ENCODE measurements at regions of chr10 and their contacts with region 1.

Region 1: DNA sequence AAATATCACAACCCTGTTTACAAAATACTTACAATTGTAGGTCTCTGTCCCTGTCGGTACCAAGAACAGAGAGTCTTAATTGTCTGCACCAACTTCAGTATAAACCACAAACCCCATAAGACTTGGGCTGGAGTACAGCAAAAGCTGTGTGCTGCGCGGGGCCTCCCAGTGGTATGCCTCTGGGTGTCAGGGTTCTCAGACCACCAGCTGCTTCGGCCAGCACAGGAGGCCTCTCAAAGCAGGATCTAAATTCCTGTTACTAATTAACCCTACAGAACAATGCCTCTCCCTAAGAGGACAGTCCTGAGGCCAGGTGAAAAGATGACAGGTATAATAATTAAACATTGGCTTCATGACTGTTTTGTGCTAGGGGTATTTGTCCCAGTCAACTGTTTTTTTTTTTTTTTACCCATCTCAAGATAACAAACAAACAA is 957 bp upstream of the SVIL start:
- DNase-seq: peak; percentile 40 to 54
- ATAC-seq: peak; percentile 36 to 54 (median 36)
- H3K4me3 ChIP-seq: no peak overlapping the region
- H3K4me3 Mint-ChIP-seq: peak overlapping the region; percentile 78
- H3K27ac ChIP-seq: peak overlapping the region; percentile 83
- H3K27ac Mint-ChIP-seq: peak overlapping the region; percentile 76 to 87
- H3K4me1 ChIP-seq: peaks cover 28% of the 10 kb centered on the region
- H3K4me1 Mint-ChIP-seq: peaks cover 46 to 54% of the 10 kb centered on the region in 2 donors
- H3K27me3 ChIP-seq: no peaks in the 10 kb centered on the region
- H3K27me3 Mint-ChIP-seq: peaks cover 0 to 3% of the 10 kb centered on the region in 2 donors
- CTCF ChIP-seq: no peak

Region 2: GRCh38 chr10:29455095-29455494 is 180.6 kb before region 1 on chr10:
- intact Hi-C with region 1: no loop called
- DNase-seq: no peak
- ATAC-seq: no peak
- H3K4me3 ChIP-seq: no peak overlapping the region
- H3K4me3 Mint-ChIP-seq: no peak overlapping the region
- H3K27ac ChIP-seq: no peak overlapping the region
- H3K27ac Mint-ChIP-seq: no peak overlapping the region
- H3K4me1 ChIP-seq: no peaks in the 10 kb centered on the region
- H3K4me1 Mint-ChIP-seq: no peaks in the 10 kb centered on the region
- H3K27me3 ChIP-seq: no peaks in the 10 kb centered on the region
- H3K27me3 Mint-ChIP-seq: no peaks in the 10 kb centered on the region
- CTCF ChIP-seq: no peak

Region 3: DNA sequence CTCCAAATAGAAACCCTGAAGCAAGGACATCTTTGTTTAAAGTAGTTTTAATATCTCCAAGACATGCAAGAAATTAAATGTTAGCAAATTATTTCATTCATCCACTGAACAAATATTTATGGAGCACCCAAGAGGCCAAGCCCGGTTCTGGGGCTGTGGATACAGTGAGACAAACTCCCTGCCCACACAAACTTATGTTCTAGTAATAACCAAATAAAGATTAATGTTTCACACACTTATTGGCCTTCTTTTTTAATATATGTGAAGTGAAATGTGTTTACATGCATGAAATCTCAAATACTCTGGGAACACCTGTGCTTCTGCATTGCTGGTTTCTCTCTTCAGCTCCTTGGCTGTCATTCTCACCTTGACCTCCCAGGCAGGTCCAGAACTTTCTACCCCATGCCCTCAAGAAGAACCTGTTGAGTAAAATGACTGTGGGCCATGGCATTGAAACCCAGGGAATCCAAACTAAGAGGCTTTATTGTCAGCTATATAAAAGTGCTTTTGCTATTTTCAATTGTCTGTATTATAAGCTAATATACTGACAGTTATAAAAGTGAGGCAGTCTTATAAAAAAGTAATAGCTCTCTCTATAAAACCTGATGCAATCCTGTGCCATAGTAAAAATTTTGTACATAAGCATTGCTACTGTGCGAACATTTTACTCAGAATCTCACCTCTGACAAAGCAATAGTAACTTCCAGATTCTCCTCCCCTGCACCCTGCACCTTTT is 44.6 kb before region 1 on chr10:
- intact Hi-C with region 1: loop called (anchors 1 kb)
- DNase-seq: peak in 1 of 2 donors; percentile 8
- ATAC-seq: no peak
- H3K4me3 ChIP-seq: no peak overlapping the region
- H3K4me3 Mint-ChIP-seq: peak overlapping the region; percentile 22
- H3K27ac ChIP-seq: no peak overlapping the region
- H3K27ac Mint-ChIP-seq: peak overlapping the region; percentile 23 to 72
- H3K4me1 ChIP-seq: peaks cover 9% of the 10 kb centered on the region
- H3K4me1 Mint-ChIP-seq: peaks cover 11 to 12% of the 10 kb centered on the region in 2 donors
- H3K27me3 ChIP-seq: no peaks in the 10 kb centered on the region
- H3K27me3 Mint-ChIP-seq: no peaks in the 10 kb centered on the region
- CTCF ChIP-seq: peak; percentile 52

Region 4: GRCh38 chr10:29618341-29619171 is 17.2 kb before region 1 on chr10:
- intact Hi-C with region 1: no loop called
- DNase-seq: no peak
- ATAC-seq: no peak
- H3K4me3 ChIP-seq: no peak overlapping the region
- H3K4me3 Mint-ChIP-seq: no peak overlapping the region
- H3K27ac ChIP-seq: no peak overlapping the region
- H3K27ac Mint-ChIP-seq: peak overlapping the region in 1 of 2 donors; percentile 73
- H3K4me1 ChIP-seq: peaks cover 3% of the 10 kb centered on the region
- H3K4me1 Mint-ChIP-seq: peaks cover 21 to 30% of the 10 kb centered on the region in 2 donors
- H3K27me3 ChIP-seq: no peaks in the 10 kb centered on the region
- H3K27me3 Mint-ChIP-seq: no peaks in the 10 kb centered on the region
- CTCF ChIP-seq: no peak

Region 5: DNA sequence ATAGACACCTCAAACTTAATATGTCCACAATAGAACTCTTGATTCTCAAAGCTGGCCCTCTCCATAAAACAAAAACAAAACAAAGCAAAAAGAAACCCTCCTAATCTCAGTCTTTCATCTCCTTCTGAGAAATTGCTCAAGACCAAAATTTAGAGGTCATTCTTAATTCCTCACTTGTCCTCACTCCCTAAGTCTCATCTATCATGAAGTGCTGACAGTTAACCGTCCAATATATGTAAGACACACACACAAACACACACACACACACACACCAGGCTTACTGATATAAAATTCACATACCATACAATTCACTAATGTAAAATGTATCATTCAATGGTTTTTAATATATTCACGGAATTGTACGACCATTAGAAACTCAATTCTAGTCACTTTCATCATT is 16.0 kb after region 1 on chr10:
- intact Hi-C with region 1: no loop called
- DNase-seq: no peak
- ATAC-seq: no peak
- H3K4me3 ChIP-seq: no peak overlapping the region
- H3K4me3 Mint-ChIP-seq: no peak overlapping the region
- H3K27ac ChIP-seq: no peak overlapping the region
- H3K27ac Mint-ChIP-seq: peak overlapping the region in 1 of 2 donors; percentile 0
- H3K4me1 ChIP-seq: peaks cover 16% of the 10 kb centered on the region
- H3K4me1 Mint-ChIP-seq: peaks cover 34 to 56% of the 10 kb centered on the region in 2 donors
- H3K27me3 ChIP-seq: no peaks in the 10 kb centered on the region
- H3K27me3 Mint-ChIP-seq: no peaks in the 10 kb centered on the region
- CTCF ChIP-seq: no peak

Region 6: DNA sequence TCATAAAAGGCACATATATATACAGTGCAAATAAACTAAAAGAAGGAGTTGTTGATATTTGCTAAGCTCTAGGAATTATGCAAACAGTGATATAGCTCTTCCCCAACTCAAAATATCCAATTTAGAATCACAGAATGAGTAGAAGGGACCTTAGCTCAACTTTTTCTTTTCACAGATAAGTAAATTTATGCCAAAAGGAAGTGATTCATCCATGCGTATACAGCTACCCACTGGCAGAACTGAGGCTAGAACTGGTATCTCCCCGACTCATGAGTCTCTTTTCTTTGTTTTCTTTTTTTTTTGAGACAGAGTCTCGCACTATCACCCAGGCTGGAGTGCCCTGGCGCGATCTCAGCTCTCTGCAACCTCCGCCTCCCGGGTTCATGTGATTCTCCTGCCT is 53.3 kb after region 1 on chr10:
- intact Hi-C with region 1: loop called (anchors 5 kb)
- DNase-seq: peak in 1 of 2 donors; percentile 34
- ATAC-seq: peak; percentile 78 to 80 (median 80)
- H3K4me3 ChIP-seq: no peak overlapping the region
- H3K4me3 Mint-ChIP-seq: peak overlapping the region; percentile 49
- H3K27ac ChIP-seq: peak overlapping the region; percentile 2
- H3K27ac Mint-ChIP-seq: peak overlapping the region; percentile 56 to 85
- H3K4me1 ChIP-seq: peaks cover 19% of the 10 kb centered on the region
- H3K4me1 Mint-ChIP-seq: peaks cover 54 to 57% of the 10 kb centered on the region in 2 donors
- H3K27me3 ChIP-seq: no peaks in the 10 kb centered on the region
- H3K27me3 Mint-ChIP-seq: no peaks in the 10 kb centered on the region
- CTCF ChIP-seq: no peak

Region 7: GRCh38 chr10:29735596-29736318 is 100.0 kb after region 1 on chr10:
- intact Hi-C with region 1: loop called (anchors 1 kb)
- DNase-seq: peak; percentile 84 to 86
- ATAC-seq: peak; percentile 85 to 91 (median 86)
- H3K4me3 ChIP-seq: peak overlapping the region; percentile 58
- H3K4me3 Mint-ChIP-seq: peak overlapping the region; percentile 86
- H3K27ac ChIP-seq: no peak overlapping the region
- H3K27ac Mint-ChIP-seq: peak overlapping the region in 1 of 2 donors; percentile 80
- H3K4me1 ChIP-seq: peaks cover 23% of the 10 kb centered on the region
- H3K4me1 Mint-ChIP-seq: peaks cover 11 to 36% of the 10 kb centered on the region in 2 donors
- H3K27me3 ChIP-seq: peaks cover 2% of the 10 kb centered on the region
- H3K27me3 Mint-ChIP-seq: peaks cover 14 to 16% of the 10 kb centered on the region in 2 donors
- CTCF ChIP-seq: peak; percentile 95